Activated CD4-positive, alpha-beta T cell treated with anti-CD3 and anti-CD28 coated beads, Interleukin-2, amount 10 ng/mL, durations not matched to agents 7 days and 5 days (primary cell): ENCODE measurements at regions of chr14 and their contacts with region 1.

Region 1: DNA sequence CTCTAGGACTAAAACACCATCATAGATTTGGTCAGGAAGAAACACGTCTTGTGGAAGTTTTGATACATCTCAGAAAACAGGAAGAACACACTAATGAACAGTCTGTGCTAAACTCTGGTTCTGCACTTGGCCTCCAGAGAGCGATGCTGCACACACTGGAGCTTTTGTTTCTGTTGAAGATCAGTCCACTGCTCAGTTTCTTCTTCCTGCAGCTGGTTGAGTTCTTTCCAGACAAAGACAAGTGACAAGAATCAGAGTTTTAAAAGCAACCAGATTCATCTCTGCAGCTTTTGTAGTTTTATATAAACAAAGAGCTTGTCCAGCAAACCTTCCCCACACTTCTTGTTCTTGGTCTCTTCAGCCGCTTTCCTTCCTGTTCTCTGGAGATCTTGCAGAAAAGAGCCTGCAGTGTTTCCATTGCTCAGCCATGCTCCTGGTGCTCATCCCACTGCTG is 229.1 kb upstream of the OR4E1 start:
- DNase-seq: peak; percentile 53
- H3K4me3 Mint-ChIP-seq: peak overlapping the region; percentile 58
- H3K27ac Mint-ChIP-seq: peak overlapping the region; percentile 36
- H3K4me1 Mint-ChIP-seq: peaks cover 21% of the 10 kb centered on the region
- H3K27me3 Mint-ChIP-seq: no peaks in the 10 kb centered on the region

Region 2: DNA sequence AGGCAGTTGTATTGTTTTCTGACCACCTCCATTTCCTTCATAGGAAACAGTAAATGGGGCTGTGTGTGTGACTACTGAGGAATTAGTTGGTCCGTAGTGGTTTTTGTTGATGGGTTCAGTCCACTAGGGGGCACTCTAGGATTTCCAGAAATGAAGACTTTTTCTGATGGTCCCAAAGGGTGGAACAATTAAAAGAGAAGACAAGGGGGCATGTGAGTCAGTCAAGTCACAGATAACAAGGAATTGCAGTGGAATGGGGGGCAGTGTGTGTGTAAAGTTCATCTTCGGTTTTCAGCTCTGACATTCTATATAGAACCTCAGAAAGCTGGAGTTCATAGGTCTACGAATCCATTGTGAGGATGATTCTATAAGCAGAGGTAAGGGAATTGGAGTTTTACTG is 42.5 kb before region 1 on chr14:
- CTCF ChIA-PET with region 1: no interaction called
- POLR2A ChIA-PET with region 1: no interaction called
- DNase-seq: peak; percentile 63
- H3K4me3 Mint-ChIP-seq: peak overlapping the region; percentile 36
- H3K27ac Mint-ChIP-seq: peak overlapping the region; percentile 52
- H3K4me1 Mint-ChIP-seq: peaks cover 7% of the 10 kb centered on the region
- H3K27me3 Mint-ChIP-seq: peaks cover 23% of the 10 kb centered on the region

Region 3: DNA sequence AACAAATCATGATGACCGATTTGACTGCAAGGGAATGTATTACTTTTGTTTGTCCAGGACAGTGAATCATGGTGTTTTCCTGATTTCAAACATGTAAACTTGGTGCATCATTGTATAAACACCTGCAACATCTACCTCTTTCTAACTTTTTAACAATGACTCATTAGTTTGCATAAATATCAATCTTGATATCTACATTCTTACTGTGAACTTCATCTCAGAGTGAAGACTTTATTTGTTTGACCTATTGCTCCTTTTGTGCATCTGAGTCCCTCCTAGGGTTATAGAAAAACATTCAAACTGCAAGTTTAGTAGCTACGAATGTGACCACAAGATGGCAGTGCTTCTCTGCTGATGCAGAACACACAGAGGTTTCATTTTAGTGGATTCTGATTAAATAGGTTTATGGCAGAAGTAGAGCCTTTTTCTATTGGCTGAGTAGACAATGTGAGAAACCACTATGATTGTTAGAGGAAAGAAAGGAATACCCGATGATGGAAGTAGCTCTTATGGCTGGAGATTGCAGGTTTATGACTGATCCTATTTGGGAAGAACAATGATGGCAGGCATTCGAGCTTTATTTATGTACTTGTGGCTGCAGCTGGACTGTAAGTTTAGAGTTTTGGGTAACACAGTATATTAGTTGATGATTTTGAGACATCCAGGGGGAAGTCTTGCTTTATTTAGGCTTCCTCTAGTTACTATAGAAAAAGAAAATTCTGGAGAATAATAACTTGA is 15.2 kb after region 1 on chr14:
- CTCF ChIA-PET with region 1: interaction called, 10 read pairs
- POLR2A ChIA-PET with region 1: no interaction called
- DNase-seq: peak; percentile 81
- H3K4me3 Mint-ChIP-seq: peak overlapping the region; percentile 72
- H3K27ac Mint-ChIP-seq: peak overlapping the region; percentile 78
- H3K4me1 Mint-ChIP-seq: peaks cover 77% of the 10 kb centered on the region
- H3K27me3 Mint-ChIP-seq: no peaks in the 10 kb centered on the region

Region 4: GRCh38 chr14:22099942-22100763 is 197.5 kb after region 1 on chr14:
- CTCF ChIA-PET with region 1: no interaction called
- POLR2A ChIA-PET with region 1: no interaction called
- DNase-seq: peak; percentile 74
- H3K4me3 Mint-ChIP-seq: no peak overlapping the region
- H3K27ac Mint-ChIP-seq: no peak overlapping the region
- H3K4me1 Mint-ChIP-seq: peaks cover 56% of the 10 kb centered on the region
- H3K27me3 Mint-ChIP-seq: no peaks in the 10 kb centered on the region